ENCODE measurements at regions of chr1 and their contacts with region 1.

Region 1: GRCh38 chr1:92951141-92951582 is 10.1 kb downstream of the DIPK1A start:
- DNase-seq: peak; percentile 83
- ATAC-seq: peak; percentile 80
- H3K4me3 ChIP-seq: peak overlapping the region in 3 of 5 experiments; percentile 8 to 32 (median 8)
- H3K4me3 Mint-ChIP-seq: no peak overlapping the region
- H3K27ac ChIP-seq: peak overlapping the region; percentile 71 to 73
- H3K27ac Mint-ChIP-seq: no peak overlapping the region
- H3K4me1 ChIP-seq: peaks cover 79 to 86% of the 10 kb centered on the region in 2 donors
- H3K4me1 Mint-ChIP-seq: peaks cover 52% of the 10 kb centered on the region
- H3K27me3 ChIP-seq: no peaks in the 10 kb centered on the region
- H3K27me3 Mint-ChIP-seq: no peaks in the 10 kb centered on the region
- CTCF ChIP-seq: no peak

Region 2: DNA sequence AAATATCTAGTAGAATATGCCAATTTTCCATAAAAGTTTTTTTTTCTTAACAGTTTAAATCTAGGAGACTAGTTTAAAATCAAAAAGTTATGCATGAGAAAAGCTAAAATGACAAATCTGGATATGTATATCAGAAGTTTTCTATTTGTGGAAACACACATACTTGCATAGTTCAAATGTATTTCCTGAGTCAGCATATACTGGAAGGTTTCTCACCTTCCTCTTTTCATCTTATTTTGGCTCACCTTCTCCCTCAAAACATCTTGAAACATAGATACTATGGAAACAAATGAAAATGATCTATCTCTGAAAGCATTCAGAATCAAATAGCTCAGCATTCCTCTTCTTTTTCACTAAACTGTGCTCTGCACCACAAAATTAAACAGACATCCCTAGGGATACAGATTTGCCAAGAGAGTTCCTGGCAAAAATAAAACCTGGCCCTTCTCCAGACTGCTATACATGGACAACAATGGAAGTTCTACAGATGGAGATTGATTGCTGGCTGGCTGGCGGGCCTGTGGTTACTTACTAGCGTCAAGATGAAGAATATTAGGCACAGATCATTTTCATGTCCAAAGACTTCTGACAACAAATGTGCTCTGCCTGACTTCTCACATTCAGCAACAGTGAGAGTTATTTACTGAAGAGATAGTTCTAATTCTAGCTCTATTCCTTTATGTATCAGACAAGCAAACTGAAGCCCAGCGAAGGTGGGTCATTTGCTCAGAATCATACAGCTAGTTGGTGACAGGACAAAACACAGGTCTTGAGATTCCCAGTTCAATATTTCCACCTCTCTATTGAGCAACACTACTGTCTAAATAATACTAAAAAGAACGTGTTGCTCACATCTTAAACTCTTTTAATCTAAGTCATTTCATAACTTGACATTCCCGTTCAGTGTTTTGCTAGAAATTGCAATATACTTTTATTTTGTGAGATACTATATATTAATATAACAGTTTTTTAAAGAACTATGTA is 16.5 kb before region 1 on chr1:
- CTCF ChIA-PET with region 1: interaction called, 5 read pairs
- POLR2A ChIA-PET with region 1: no interaction called
- intact Hi-C with region 1: loop called (anchors 2 kb)
- DNase-seq: no peak
- ATAC-seq: no peak
- H3K4me3 ChIP-seq: no peak overlapping the region
- H3K4me3 Mint-ChIP-seq: peak overlapping the region; percentile 3
- H3K27ac ChIP-seq: peak overlapping the region in 1 of 2 donors; percentile 38
- H3K27ac Mint-ChIP-seq: peak overlapping the region; percentile 3
- H3K4me1 ChIP-seq: peaks cover 56 to 74% of the 10 kb centered on the region in 2 donors
- H3K4me1 Mint-ChIP-seq: peaks cover 78% of the 10 kb centered on the region
- H3K27me3 ChIP-seq: no peaks in the 10 kb centered on the region
- H3K27me3 Mint-ChIP-seq: no peaks in the 10 kb centered on the region
- CTCF ChIP-seq: no peak

Measured in B cell (primary cell).